Activated CD8-positive, alpha-beta T cell treated with anti-CD3 and anti-CD28 coated beads, Interleukin-2, amount 10 ng/mL, durations not matched to agents 7 days and 5 days (primary cell): ENCODE measurements at regions of chr7 and their contacts with region 1.

Region 1: GRCh38 chr7:134316539-134317344 is at the start of gene SLC35B4:
- DNase-seq: peak; percentile 98
- ATAC-seq: peak; percentile 98
- H3K4me3 Mint-ChIP-seq: peak within 1 kb of the TSS; percentile 91
- H3K27ac Mint-ChIP-seq: peak within 1 kb of the TSS; percentile 87
- H3K4me1 Mint-ChIP-seq: peaks cover 18% of the 10 kb centered on the region
- H3K27me3 Mint-ChIP-seq: peaks cover 9% of the 10 kb centered on the region
- total RNA-seq, gene SLC35B4: 18.9 to 20.8 TPM

Region 2: GRCh38 chr7:134327896-134328295 is 11.2 kb after region 1 on chr7:
- CTCF ChIA-PET with region 1: interaction called, 10 read pairs
- POLR2A ChIA-PET with region 1: no interaction called
- DNase-seq: peak; percentile 78
- ATAC-seq: peak; percentile 91
- H3K4me3 Mint-ChIP-seq: no peak overlapping the region
- H3K27ac Mint-ChIP-seq: no peak overlapping the region
- H3K4me1 Mint-ChIP-seq: no peaks in the 10 kb centered on the region
- H3K27me3 Mint-ChIP-seq: peaks cover 15% of the 10 kb centered on the region

Region 3: DNA sequence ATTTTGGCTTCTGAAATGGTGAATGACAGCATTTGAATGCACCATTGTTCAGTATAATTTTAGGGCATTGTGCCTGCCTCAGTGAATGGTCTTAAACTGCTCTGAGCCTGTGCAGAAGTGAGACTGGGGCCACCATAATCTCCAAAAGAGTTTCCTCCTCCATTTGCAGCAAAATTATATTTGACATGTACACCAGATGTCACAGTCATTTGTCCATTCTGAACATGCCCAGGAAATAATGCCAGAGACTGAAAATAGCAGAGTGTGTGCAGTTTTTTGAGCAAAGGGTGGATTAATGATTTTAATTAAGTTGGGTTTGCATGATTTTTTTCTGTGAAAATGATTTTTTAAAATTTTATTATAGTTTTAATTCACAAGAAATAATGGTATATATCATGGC is 26.4 kb after region 1 on chr7:
- CTCF ChIA-PET with region 1: no interaction called
- POLR2A ChIA-PET with region 1: no interaction called
- DNase-seq: no peak
- ATAC-seq: no peak
- H3K4me3 Mint-ChIP-seq: no peak overlapping the region
- H3K27ac Mint-ChIP-seq: no peak overlapping the region
- H3K4me1 Mint-ChIP-seq: no peaks in the 10 kb centered on the region
- H3K27me3 Mint-ChIP-seq: peaks cover 14% of the 10 kb centered on the region

Region 4: GRCh38 chr7:134355927-134356326 is 39.2 kb after region 1 on chr7:
- CTCF ChIA-PET with region 1: interaction called, 13 read pairs
- POLR2A ChIA-PET with region 1: no interaction called
- DNase-seq: no peak
- ATAC-seq: no peak
- H3K4me3 Mint-ChIP-seq: no peak overlapping the region
- H3K27ac Mint-ChIP-seq: no peak overlapping the region
- H3K4me1 Mint-ChIP-seq: no peaks in the 10 kb centered on the region
- H3K27me3 Mint-ChIP-seq: peaks cover 3% of the 10 kb centered on the region

Region 5: DNA sequence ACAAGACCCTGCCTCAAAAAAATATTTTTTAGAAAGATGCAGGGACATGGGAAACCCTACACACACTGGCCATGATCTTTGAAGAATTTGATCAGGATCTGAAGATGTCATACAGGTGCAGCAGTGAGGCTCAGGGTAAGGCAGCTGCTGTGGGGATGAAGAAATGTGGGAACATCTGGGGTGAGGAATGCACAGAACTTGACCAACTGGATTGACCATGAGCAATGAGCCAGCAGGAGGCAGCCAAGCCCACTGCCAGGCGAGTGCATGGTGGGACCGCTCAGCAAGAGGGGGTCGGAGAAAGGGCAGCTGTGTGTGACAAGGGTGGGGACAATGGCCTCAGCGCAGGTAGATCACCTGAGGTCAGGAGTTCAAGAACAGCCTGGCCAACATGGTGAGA is 86.9 kb after region 1 on chr7:
- CTCF ChIA-PET with region 1: no interaction called
- POLR2A ChIA-PET with region 1: no interaction called
- DNase-seq: no peak
- ATAC-seq: no peak
- H3K4me3 Mint-ChIP-seq: no peak overlapping the region
- H3K27ac Mint-ChIP-seq: no peak overlapping the region
- H3K4me1 Mint-ChIP-seq: no peaks in the 10 kb centered on the region
- H3K27me3 Mint-ChIP-seq: peaks cover 7% of the 10 kb centered on the region